ENCODE measurements at regions of chr18 and their contacts with region 1.

Region 1: GRCh38 chr18:35343936-35344735 is at the start of gene ZNF24:
- DNase-seq: peak; percentile 86 to 96 (median 90)
- ATAC-seq: peak; percentile 84 to 87
- H3K4me3 Mint-ChIP-seq: peak within 1 kb of the TSS; percentile 95 to 100 (median 98)
- H3K27ac Mint-ChIP-seq: peak within 1 kb of the TSS; percentile 92 to 99 (median 98)
- H3K4me1 Mint-ChIP-seq: peaks cover 19 to 65% (median 48%) of the 10 kb centered on the region in 4 donors
- H3K27me3 Mint-ChIP-seq: no peaks in the 10 kb centered on the region
- polyA plus RNA-seq, gene ZNF24: 78.0 to 92.9 (median 90.2) TPM

Region 2: GRCh38 chr18:35290073-35290735 is 53.9 kb before region 1 on chr18 and contains the start of gene ZSCAN30:
- POLR2A ChIA-PET with region 1: interaction called, 15 read pairs
- DNase-seq: peak; percentile 92 to 97 (median 94)
- ATAC-seq: peak; percentile 94
- H3K4me3 Mint-ChIP-seq: peak within 1 kb of the TSS; percentile 91 to 100 (median 99)
- H3K27ac Mint-ChIP-seq: peak within 1 kb of the TSS; percentile 96 to 100 (median 99)
- H3K4me1 Mint-ChIP-seq: peaks cover 32 to 80% (median 76%) of the 10 kb centered on the region in 4 donors
- H3K27me3 Mint-ChIP-seq: peaks cover 0 to 1% (median 0%) of the 10 kb centered on the region in 5 donors
- polyA plus RNA-seq, gene ZSCAN30: 4.3 to 7.5 (median 5.2) TPM

Measured in naive thymus-derived CD8-positive, alpha-beta T cell (primary cell).